Colonic mucosa (tissue), 4 donors: ENCODE measurements at regions of chr11 and their contacts with region 1.

Region 1: DNA sequence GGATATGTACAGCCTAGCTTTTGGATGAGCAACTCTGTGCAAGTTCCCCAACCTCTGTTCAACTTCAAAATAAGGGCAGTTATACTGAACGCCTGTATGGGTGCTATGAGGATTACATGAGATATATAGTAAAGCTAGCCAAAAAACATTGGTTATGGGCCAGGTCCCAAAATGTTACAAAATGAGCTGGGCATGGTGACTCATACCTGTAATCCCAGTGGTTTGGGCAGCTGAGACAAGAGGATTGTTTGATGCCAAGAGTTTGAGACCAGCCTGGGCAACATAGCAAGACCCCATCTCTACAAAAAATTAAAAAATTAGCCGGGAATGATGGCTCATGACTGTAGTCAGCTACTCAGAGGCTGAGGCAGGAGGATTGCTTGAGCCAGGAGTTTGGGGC is 118.4 kb downstream of the TEAD1 start:
- DNase-seq: no peak
- H3K4me3 ChIP-seq: no peak overlapping the region
- H3K27ac ChIP-seq: no peak overlapping the region
- H3K4me1 ChIP-seq: no peaks in the 10 kb centered on the region
- H3K27me3 ChIP-seq: no peaks in the 10 kb centered on the region
- CTCF ChIP-seq: no peak

Region 2: GRCh38 chr11:12731841-12732336 is 60.7 kb before region 1 on chr11:
- intact Hi-C with region 1: loop called (anchors 10 kb)
- DNase-seq: no peak
- H3K4me3 ChIP-seq: no peak overlapping the region
- H3K27ac ChIP-seq: no peak overlapping the region
- H3K4me1 ChIP-seq: no peaks in the 10 kb centered on the region
- H3K27me3 ChIP-seq: no peaks in the 10 kb centered on the region
- CTCF ChIP-seq: no peak